ENCODE measurements at regions of chr4 and their contacts with region 1.

Region 1: DNA sequence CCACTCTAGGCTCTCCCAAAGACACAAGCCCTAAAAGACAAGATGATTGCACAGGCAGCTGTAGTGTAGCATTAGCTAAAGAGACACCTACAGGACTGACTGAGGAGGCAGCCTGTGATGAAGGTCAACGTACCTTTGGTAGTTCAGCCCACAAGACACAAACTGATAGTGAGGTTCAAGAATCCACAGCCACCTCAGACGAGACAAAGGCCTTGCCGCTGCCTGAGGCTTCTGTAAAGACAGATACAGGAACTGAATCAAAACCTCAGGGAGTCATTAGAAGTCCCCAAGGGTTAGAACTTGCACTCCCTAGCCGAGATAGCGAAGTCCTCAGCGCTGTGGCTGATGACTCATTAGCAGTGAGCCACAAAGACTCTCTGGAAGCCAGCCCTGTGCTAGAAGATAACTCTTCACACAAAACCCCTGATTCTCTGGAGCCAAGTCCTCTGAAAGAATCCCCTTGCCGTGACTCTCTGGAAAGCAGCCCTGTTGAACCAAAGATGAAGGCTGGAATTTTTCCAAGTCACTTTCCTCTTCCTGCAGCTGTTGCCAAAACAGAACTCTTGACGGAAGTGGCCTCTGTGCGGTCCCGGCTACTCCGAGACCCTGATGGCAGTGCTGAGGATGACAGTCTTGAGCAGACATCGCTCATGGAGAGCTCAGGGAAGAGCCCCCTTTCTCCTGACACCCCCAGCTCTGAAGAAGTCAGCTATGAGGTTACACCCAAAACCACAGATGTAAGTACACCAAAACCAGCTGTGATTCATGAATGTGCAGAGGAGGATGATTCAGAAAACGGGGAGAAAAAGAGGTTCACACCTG is 306.3 kb downstream of the ANK2 start:
- DNase-seq: no peak
- H3K4me3 ChIP-seq: peak overlapping the region in 1 of 3 donors; percentile 19
- H3K27ac ChIP-seq: peak overlapping the region in 1 of 2 donors; percentile 35
- H3K4me1 ChIP-seq: no peaks in the 10 kb centered on the region
- H3K27me3 ChIP-seq: no peaks in the 10 kb centered on the region
- CTCF ChIP-seq: no peak
- POLR2A ChIP-seq: no peak

Region 2: DNA sequence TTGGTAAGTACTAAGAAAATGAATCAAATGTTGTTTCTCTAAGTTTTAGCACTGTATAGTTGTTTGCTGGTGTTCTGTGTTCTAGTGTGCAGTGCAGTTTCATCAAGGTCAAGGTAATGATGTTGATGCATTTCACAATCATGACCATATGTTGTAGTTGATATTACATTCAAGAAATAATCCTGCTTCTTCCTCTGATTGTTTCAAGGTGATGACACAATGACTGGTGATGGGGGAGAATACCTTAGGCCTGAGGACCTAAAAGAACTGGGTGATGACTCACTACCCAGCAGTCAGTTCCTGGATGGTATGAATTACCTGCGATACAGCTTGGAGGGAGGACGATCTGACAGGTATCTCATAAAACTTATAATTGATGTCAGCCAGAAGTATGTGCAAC is 44.7 kb before region 1 on chr4:
- intact Hi-C with region 1: no loop called
- DNase-seq: no peak
- H3K4me3 ChIP-seq: no peak overlapping the region
- H3K27ac ChIP-seq: no peak overlapping the region
- H3K4me1 ChIP-seq: no peaks in the 10 kb centered on the region
- H3K27me3 ChIP-seq: no peaks in the 10 kb centered on the region
- CTCF ChIP-seq: no peak
- POLR2A ChIP-seq: no peak

Region 3: GRCh38 chr4:113325876-113326615 is 29.7 kb before region 1 on chr4:
- intact Hi-C with region 1: loop called (anchors 2 kb)
- DNase-seq: no peak
- H3K4me3 ChIP-seq: no peak overlapping the region
- H3K27ac ChIP-seq: no peak overlapping the region
- H3K4me1 ChIP-seq: no peaks in the 10 kb centered on the region
- H3K27me3 ChIP-seq: no peaks in the 10 kb centered on the region
- CTCF ChIP-seq: no peak
- POLR2A ChIP-seq: no peak